Vagina (tissue), 2 donors: ENCODE measurements at regions of chr7 and their contacts with region 1.

Region 1: GRCh38 chr7:93249491-93250148 is 17.5 kb downstream of the VPS50 start:
- DNase-seq: no peak
- H3K4me3 ChIP-seq: no peak overlapping the region
- H3K27ac ChIP-seq: no peak overlapping the region
- H3K4me1 ChIP-seq: no peaks in the 10 kb centered on the region
- H3K27me3 ChIP-seq: no peaks in the 10 kb centered on the region
- CTCF ChIP-seq: no peak
- POLR2A ChIP-seq: no peak

Region 2: GRCh38 chr7:93298671-93299070 is 49.1 kb after region 1 on chr7:
- intact Hi-C with region 1: no loop called
- DNase-seq: no peak
- H3K4me3 ChIP-seq: no peak overlapping the region
- H3K27ac ChIP-seq: no peak overlapping the region
- H3K4me1 ChIP-seq: no peaks in the 10 kb centered on the region
- H3K27me3 ChIP-seq: no peaks in the 10 kb centered on the region
- CTCF ChIP-seq: no peak
- POLR2A ChIP-seq: no peak

Region 3: DNA sequence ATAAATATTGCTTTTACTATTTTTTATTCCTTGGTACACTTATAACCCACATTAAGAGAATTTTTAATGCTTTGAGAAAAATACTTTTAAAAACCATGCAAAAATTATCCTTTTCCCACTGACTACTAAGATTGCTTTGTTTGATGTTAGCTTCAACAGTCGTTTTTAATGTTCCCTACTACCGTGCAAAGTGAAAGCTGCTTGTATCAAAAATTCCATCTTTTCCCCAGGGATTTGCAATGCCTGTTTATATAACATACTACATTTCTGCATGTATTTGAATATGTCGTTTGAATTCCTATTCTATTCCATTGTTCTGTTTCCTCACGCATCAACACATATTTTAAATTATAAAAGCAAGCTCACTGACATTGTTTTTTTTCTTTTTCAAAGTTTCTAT is 586.5 kb after region 1 on chr7:
- intact Hi-C with region 1: loop called (anchors 10 kb)
- DNase-seq: no peak
- H3K4me3 ChIP-seq: no peak overlapping the region
- H3K27ac ChIP-seq: no peak overlapping the region
- H3K4me1 ChIP-seq: no peaks in the 10 kb centered on the region
- H3K27me3 ChIP-seq: no peaks in the 10 kb centered on the region
- CTCF ChIP-seq: no peak
- POLR2A ChIP-seq: no peak